ENCODE measurements at regions of chr7 and their contacts with region 1.

Region 1: GRCh38 chr7:54773472-54774399 is 14.7 kb upstream of the SEC61G start:
- DNase-seq: peak; percentile 24 to 74 (median 49)
- ATAC-seq: peak; percentile 71 to 86 (median 82)
- H3K4me3 ChIP-seq: peak overlapping the region in 1 of 2 donors; percentile 39
- H3K4me3 Mint-ChIP-seq: peak overlapping the region; percentile 77 to 80 (median 78)
- H3K27ac ChIP-seq: no peak overlapping the region
- H3K27ac Mint-ChIP-seq: peak overlapping the region; percentile 74 to 83
- H3K4me1 ChIP-seq: peaks cover 0 to 4% of the 10 kb centered on the region in 2 experiments
- H3K4me1 Mint-ChIP-seq: peaks cover 6 to 13% (median 8%) of the 10 kb centered on the region in 3 donors
- H3K27me3 ChIP-seq: peaks cover 6 to 18% of the 10 kb centered on the region in 2 experiments
- H3K27me3 Mint-ChIP-seq: peaks cover 20 to 21% of the 10 kb centered on the region in 2 donors

Region 2: DNA sequence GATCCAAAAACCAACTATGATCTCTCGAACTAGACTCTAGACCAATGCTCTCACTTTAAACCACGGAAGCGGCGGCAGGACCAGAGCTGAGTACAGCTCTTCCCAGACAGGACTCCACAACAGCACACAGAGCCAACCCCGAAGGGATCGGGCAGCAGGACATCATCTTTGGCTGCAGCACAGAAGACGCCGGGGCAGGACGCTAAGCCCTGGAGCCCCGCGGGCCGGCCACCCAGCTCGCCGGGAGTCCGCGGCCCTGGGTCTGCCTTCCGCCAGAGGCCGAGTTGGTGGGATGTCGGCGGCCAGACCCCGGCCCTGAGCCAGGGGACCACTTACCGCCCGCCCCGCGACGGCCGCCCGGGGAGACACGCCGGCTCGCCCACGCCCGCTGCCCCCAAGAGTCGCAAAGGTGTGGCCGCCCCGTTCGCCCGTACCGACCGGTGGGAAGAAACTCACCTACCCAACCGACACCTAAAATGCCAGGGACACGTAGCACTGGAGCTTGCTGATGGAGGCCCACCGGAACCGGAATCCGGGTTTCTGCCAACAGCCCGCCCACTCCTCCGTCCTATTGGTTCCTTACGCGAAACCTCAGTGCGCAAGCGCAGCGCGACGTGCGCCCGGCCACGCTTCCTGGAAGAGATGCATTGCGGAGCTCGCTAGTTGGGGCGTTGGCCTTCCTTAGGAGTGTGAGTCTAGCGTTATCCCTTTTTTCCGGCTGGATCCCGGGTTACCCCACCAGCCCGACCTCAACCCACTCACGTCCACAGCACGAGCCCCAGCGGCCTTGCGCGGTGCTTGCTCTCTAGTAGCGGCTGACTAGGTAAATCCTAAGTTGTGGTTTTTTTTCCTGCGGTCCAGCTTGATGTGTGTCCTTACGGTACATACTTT is 14.8 kb before region 1 on chr7 and contains the start of gene SEC61G:
- CTCF ChIA-PET with region 1: interaction called, 5 to 22 read pairs
- POLR2A ChIA-PET with region 1: interaction called, 3 to 11 read pairs
- DNase-seq: peak; percentile 86 to 98 (median 92)
- ATAC-seq: peak; percentile 96 to 98 (median 97)
- H3K4me3 ChIP-seq: peak within 1 kb of the TSS; percentile 77 to 80
- H3K4me3 Mint-ChIP-seq: peak within 1 kb of the TSS; percentile 96 to 100 (median 97)
- H3K27ac ChIP-seq: peak within 1 kb of the TSS; percentile 84
- H3K27ac Mint-ChIP-seq: peak within 1 kb of the TSS; percentile 94 to 96
- H3K4me1 ChIP-seq: peaks cover 13% of the 10 kb centered on the region in 2 experiments
- H3K4me1 Mint-ChIP-seq: peaks cover 33 to 40% (median 38%) of the 10 kb centered on the region in 3 donors
- H3K27me3 ChIP-seq: no peaks in the 10 kb centered on the region
- H3K27me3 Mint-ChIP-seq: peaks cover 0 to 5% of the 10 kb centered on the region in 2 donors
- total RNA-seq, gene SEC61G: 42.7 to 65.1 (median 62.1) TPM

Region 3: DNA sequence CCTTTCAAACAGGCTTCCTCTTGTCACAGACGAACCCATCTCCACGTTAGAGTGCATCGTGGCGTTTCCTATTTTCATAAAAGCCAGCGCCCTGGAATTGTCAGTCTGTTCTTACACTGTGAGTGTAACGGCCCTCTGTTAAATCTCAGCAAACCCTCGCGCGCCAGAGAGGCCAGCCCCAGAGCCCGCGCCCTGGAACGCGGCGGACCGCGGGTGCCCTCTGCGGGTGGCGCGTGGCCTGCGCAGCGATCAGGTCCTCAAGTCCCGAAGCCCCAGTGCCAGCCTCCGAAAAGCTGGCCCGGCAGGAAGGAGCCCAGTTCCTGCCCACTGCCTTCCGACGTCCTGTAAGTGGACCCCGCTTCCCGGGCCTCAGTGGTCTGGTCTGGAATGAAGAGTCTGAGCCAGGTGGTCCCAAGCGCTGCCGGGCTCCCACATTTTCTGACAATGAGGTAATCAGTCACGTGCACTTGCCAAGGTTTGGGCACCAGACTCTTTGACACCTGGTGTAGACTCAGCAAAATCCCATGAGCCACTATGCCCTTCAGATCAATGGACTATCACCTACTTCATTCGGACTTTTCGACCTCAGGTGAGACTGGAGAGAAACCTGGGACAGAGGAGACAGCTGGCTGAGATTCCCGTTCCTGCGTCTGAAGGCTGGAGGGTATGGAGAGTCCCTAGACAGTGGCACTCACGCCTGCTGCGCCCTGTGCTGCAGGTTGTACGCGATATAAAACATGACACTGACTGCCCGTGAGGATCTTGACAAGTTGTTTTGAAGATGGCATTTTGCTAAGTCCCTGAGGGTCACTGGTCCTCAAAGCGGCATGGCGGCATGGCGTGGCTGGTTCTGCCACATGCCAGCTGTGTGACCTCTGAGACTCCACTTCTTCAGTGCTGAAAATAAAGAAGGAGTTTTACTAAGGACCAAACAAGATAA is 482.0 kb after region 1 on chr7:
- CTCF ChIA-PET with region 1: interaction called, 9 to 20 read pairs
- POLR2A ChIA-PET with region 1: no interaction called
- DNase-seq: peak in 33 of 35 experiments; percentile 29 to 79 (median 53)
- ATAC-seq: peak; percentile 85 to 94 (median 90)
- H3K4me3 ChIP-seq: peak overlapping the region; percentile 45 to 62
- H3K4me3 Mint-ChIP-seq: peak overlapping the region; percentile 83 to 94 (median 86)
- H3K27ac ChIP-seq: no peak overlapping the region
- H3K27ac Mint-ChIP-seq: no peak overlapping the region
- H3K4me1 ChIP-seq: peaks cover 3 to 17% of the 10 kb centered on the region in 2 experiments
- H3K4me1 Mint-ChIP-seq: peaks cover 7 to 13% (median 7%) of the 10 kb centered on the region in 3 donors
- H3K27me3 ChIP-seq: peaks cover 17 to 35% of the 10 kb centered on the region in 2 experiments
- H3K27me3 Mint-ChIP-seq: peaks cover 44 to 55% of the 10 kb centered on the region in 2 donors

Region 4: DNA sequence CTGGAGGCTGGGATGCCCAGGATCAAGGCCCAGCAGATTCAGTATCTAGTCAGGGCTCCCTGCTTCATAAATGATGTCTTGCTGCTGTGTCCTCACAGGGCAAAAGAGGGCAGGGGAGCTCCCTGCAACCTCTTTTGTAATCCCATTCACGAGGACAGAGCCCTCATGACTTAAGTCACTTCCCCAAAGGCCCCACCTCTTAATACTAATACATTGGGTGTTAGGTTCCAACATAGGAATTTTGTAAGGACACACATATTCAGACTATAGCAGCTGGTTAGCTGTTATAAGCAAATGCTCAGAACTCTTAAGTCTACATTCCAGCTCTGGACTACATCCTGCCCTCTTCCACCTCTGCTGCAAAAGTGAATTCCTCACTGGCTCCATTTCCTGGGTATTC is 735.6 kb after region 1 on chr7:
- CTCF ChIA-PET with region 1: interaction called in 1 of 2 experiments, 10 read pairs
- POLR2A ChIA-PET with region 1: no interaction called
- DNase-seq: no peak
- ATAC-seq: no peak
- H3K4me3 ChIP-seq: no peak overlapping the region
- H3K4me3 Mint-ChIP-seq: no peak overlapping the region
- H3K27ac ChIP-seq: no peak overlapping the region
- H3K27ac Mint-ChIP-seq: peak overlapping the region; percentile 49 to 56
- H3K4me1 ChIP-seq: peaks cover 0 to 6% of the 10 kb centered on the region in 2 experiments
- H3K4me1 Mint-ChIP-seq: peaks cover 39 to 67% (median 47%) of the 10 kb centered on the region in 3 donors
- H3K27me3 ChIP-seq: no peaks in the 10 kb centered on the region
- H3K27me3 Mint-ChIP-seq: no peaks in the 10 kb centered on the region

Measured in T-cell (primary cell).